ENCODE measurements at regions of chr11 and their contacts with region 1.

Region 1: DNA sequence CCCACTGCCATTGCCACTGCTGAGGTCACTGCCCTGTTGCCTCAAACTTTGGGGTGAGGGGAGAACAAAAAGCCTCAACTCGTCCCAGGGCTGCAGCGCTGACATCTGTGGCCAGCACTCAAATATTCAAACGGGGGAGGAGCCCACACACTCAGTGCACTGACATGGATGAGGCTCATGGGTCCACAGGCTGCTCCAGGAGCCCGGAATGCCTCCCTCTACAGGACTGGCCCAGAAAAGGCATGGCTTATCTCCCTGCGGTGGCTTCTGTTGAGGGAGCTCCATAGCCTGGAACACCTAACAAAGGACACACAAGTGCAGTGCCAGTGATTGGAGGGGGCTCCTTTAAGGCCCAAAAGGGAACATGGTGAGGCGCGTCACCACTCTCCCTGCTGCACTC is 341.1 kb upstream of the LUZP2 start:
- DNase-seq: no peak
- H3K4me3 ChIP-seq: no peak overlapping the region
- H3K27ac ChIP-seq: no peak overlapping the region
- H3K4me1 ChIP-seq: no peaks in the 10 kb centered on the region
- H3K27me3 ChIP-seq: no peaks in the 10 kb centered on the region
- CTCF ChIP-seq: no peak
- POLR2A ChIP-seq: no peak

Region 2: GRCh38 chr11:24068255-24068654 is 87.5 kb before region 1 on chr11:
- intact Hi-C with region 1: loop called in 1 of 2 experiments (anchors 5 kb)
- DNase-seq: no peak
- H3K4me3 ChIP-seq: no peak overlapping the region
- H3K27ac ChIP-seq: no peak overlapping the region
- H3K4me1 ChIP-seq: no peaks in the 10 kb centered on the region
- H3K27me3 ChIP-seq: no peaks in the 10 kb centered on the region
- CTCF ChIP-seq: no peak
- POLR2A ChIP-seq: no peak

Region 3: GRCh38 chr11:24267014-24267413 is 111.2 kb after region 1 on chr11:
- intact Hi-C with region 1: no loop called
- DNase-seq: no peak
- H3K4me3 ChIP-seq: no peak overlapping the region
- H3K27ac ChIP-seq: no peak overlapping the region
- H3K4me1 ChIP-seq: no peaks in the 10 kb centered on the region
- H3K27me3 ChIP-seq: no peaks in the 10 kb centered on the region
- CTCF ChIP-seq: no peak
- POLR2A ChIP-seq: no peak

Region 4: DNA sequence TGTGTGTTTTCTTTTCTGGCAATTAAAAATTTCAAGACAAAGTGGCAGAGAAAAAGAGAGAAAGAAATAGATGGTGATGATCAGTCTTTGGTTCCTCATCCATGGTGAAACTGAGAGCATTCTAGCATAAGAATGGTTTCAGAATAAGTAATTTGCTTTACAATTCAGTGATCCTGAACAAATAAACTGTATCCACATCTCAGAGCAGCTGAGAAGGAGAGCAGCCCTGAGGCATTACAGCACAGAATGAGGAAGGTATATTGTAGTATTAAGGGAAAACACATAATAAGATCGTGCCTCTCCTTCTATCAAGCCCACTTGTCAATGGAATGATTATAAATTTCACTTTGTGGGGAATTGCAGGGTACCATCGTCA is 358.4 kb after region 1 on chr11:
- intact Hi-C with region 1: no loop called
- DNase-seq: no peak
- H3K4me3 ChIP-seq: no peak overlapping the region
- H3K27ac ChIP-seq: no peak overlapping the region
- H3K4me1 ChIP-seq: no peaks in the 10 kb centered on the region
- H3K27me3 ChIP-seq: no peaks in the 10 kb centered on the region
- CTCF ChIP-seq: no peak
- POLR2A ChIP-seq: no peak

Measured in adrenal gland (tissue), 19 donors.